ENCODE measurements at regions of chr15 and their contacts with region 1.

Region 1: DNA sequence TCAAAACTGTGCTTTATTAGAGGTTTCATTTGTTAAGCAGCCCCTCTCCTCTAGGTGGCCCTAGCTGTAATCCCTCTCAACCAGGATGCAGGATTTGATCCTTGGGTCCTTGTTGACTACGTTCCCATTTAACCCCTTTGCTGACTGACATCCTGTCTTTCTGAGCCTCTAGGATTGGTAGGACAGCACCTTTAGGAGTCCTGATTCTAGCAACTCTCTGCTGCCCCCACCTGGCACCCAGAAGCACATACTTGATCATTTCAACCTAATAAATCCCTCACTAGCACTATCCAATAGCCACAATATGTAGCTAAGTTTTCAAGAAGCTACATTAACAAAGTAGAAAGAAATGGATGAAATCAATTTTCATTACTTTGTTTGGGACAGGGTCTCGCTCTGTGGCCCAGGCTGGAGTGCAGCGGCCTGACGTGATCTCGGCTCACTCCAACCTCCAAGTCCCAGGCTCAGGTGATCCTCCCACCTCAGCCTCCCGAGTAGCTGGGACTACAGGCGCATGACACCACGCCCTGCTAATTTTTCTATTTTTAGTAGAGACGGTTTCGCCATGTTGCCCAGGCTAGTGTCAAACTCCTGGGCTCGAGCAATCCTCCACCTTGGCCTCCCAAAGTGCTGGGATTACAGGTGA is 28.3 kb downstream of the RSL24D1 start:
- DNase-seq: peak; percentile 81
- ATAC-seq: peak; percentile 97
- H3K4me3 ChIP-seq: no peak overlapping the region
- H3K27ac ChIP-seq: no peak overlapping the region
- H3K4me1 ChIP-seq: no peaks in the 10 kb centered on the region
- H3K27me3 ChIP-seq: no peaks in the 10 kb centered on the region
- CTCF ChIP-seq: peak; percentile 37 to 90 (median 85); a peak in 5 of 6 replicates
- POLR2A ChIP-seq: no peak
- RAD21 ChIP-seq: peak; percentile 56

Region 2: GRCh38 chr15:53811530-53811929 is 1356.9 kb before region 1 on chr15:
- CTCF ChIA-PET with region 1: interaction called, 3 read pairs
- POLR2A ChIA-PET with region 1: no interaction called
- RAD21 ChIA-PET with region 1: no interaction called
- intact Hi-C with region 1: loop called (anchors 5 kb)
- DNase-seq: peak; percentile 7
- ATAC-seq: no peak
- H3K4me3 ChIP-seq: no peak overlapping the region
- H3K27ac ChIP-seq: no peak overlapping the region
- H3K4me1 ChIP-seq: no peaks in the 10 kb centered on the region
- H3K27me3 ChIP-seq: no peaks in the 10 kb centered on the region
- CTCF ChIP-seq: peak in 2 of 3 experiments; percentile 7 to 28; a peak in 3 of 6 replicates
- POLR2A ChIP-seq: no peak
- RAD21 ChIP-seq: peak; percentile 29; the same call in 1 of the 2 replicates

Region 3: GRCh38 chr15:53962332-53963241 is 1205.9 kb before region 1 on chr15:
- CTCF ChIA-PET with region 1: interaction called, 4 read pairs
- POLR2A ChIA-PET with region 1: no interaction called
- RAD21 ChIA-PET with region 1: no interaction called
- intact Hi-C with region 1: loop called (anchors 5 kb)
- DNase-seq: no peak
- ATAC-seq: no peak
- H3K4me3 ChIP-seq: no peak overlapping the region
- H3K27ac ChIP-seq: no peak overlapping the region
- H3K4me1 ChIP-seq: no peaks in the 10 kb centered on the region
- H3K27me3 ChIP-seq: no peaks in the 10 kb centered on the region
- CTCF ChIP-seq: peak in 2 of 3 experiments; percentile 18 to 42; a peak in 3 of 6 replicates
- POLR2A ChIP-seq: no peak
- RAD21 ChIP-seq: peak; percentile 19; the same call in 1 of the 2 replicates

Region 4: GRCh38 chr15:55179141-55179540 is 10.7 kb after region 1 on chr15:
- CTCF ChIA-PET with region 1: interaction called, 16 read pairs
- POLR2A ChIA-PET with region 1: no interaction called
- RAD21 ChIA-PET with region 1: no interaction called
- intact Hi-C with region 1: no loop called
- DNase-seq: no peak
- ATAC-seq: no peak
- H3K4me3 ChIP-seq: no peak overlapping the region
- H3K27ac ChIP-seq: no peak overlapping the region
- H3K4me1 ChIP-seq: no peaks in the 10 kb centered on the region
- H3K27me3 ChIP-seq: no peaks in the 10 kb centered on the region
- CTCF ChIP-seq: no peak
- POLR2A ChIP-seq: no peak
- RAD21 ChIP-seq: no peak

Measured in HCT116 (cell line).